Activated CD8-positive, alpha-beta memory T cell treated with anti-CD3 and anti-CD28 coated beads, Interleukin-2, amount 10 ng/mL, durations not matched to agents 7 days and 5 days (primary cell): ENCODE measurements at regions of chr19 and their contacts with region 1.

Region 1: GRCh38 chr19:34220472-34221063 is 33.8 kb upstream of the GARRE1 start:
- DNase-seq: peak; percentile 74
- ATAC-seq: no peak
- H3K4me3 Mint-ChIP-seq: no peak overlapping the region
- H3K27ac Mint-ChIP-seq: no peak overlapping the region
- H3K4me1 Mint-ChIP-seq: peaks cover 47% of the 10 kb centered on the region
- H3K27me3 Mint-ChIP-seq: no peaks in the 10 kb centered on the region

Region 2: DNA sequence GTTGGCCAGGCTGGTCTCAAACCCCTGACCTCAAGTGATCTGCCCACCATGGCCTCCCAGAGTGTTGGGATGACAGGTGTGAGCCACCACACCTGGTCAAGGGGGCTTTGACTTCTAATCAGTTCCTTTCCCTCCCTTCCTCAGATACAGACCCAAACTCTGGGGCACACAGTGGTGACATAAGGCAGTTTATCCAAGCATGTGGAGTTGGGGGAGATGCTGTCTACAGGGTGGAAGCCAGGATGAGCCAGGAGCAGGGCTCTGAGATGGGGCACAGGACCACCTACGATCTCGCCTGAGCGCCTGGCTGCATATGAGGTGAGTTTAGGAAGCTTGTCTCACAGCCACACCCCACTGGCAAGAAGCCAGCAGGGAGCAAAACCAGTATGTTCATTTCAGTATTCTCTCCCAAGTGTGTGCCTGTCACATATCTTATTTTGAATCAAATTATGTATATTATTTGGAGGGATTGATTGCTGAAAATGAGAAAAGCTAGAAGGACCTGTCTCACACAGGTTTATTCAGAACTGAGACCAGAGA is 356.2 kb before region 1 on chr19:
- CTCF ChIA-PET with region 1: no interaction called
- DNase-seq: no peak
- ATAC-seq: no peak
- H3K4me3 Mint-ChIP-seq: no peak overlapping the region
- H3K27ac Mint-ChIP-seq: no peak overlapping the region
- H3K4me1 Mint-ChIP-seq: no peaks in the 10 kb centered on the region
- H3K27me3 Mint-ChIP-seq: peaks cover 14% of the 10 kb centered on the region

Region 3: DNA sequence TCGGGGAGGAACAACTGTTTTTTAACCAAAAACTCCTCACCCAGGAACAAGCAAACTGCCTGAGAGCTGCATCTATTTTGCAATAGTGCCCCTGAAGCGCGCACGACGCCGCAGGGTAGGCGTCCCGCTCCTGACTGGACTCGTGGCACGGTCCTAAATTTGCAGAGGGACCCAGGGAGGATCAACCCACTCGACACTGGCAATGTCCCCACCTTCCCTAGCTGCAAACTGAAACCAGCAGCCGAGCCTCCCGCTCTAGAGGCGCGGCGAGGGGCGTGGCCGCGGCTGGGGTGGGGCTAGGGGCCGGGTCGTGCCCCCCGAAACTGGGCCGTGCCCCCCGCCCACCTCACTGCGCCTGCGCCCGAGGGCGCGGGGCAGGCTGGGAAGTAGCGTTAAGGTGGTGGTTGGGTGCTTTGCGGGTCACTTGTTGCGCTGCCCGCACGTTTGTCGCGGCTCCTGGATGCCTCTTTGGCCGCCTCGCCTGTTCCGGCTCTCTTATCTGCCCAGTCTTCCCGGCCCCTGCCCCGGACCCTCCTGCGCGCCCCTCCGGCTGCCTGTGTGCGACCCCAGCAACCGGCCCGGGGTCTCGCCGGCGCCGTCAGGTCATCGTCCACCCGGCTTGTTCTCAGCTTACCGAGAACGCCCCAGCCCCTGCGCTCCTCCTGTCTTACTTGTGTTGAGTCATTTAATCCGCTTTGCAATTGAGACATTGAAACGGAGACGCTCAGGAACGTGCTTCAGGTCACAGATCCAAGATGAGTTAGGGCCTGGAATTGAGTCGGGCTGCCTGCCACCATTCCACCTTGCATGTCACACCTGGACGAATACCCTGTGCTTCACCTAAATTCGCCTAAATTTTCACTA is 86.1 kb before region 1 on chr19:
- CTCF ChIA-PET with region 1: interaction called, 11 read pairs
- DNase-seq: peak; percentile 94
- ATAC-seq: peak; percentile 98
- H3K4me3 Mint-ChIP-seq: peak overlapping the region; percentile 95
- H3K27ac Mint-ChIP-seq: peak overlapping the region; percentile 93
- H3K4me1 Mint-ChIP-seq: peaks cover 4% of the 10 kb centered on the region
- H3K27me3 Mint-ChIP-seq: peaks cover 2% of the 10 kb centered on the region

Region 4: GRCh38 chr19:34171877-34172660 is 48.5 kb before region 1 on chr19 and contains the start of gene LSM14A:
- CTCF ChIA-PET with region 1: interaction called, 10 read pairs
- DNase-seq: peak; percentile 93
- ATAC-seq: peak; percentile 85
- H3K4me3 Mint-ChIP-seq: peak within 1 kb of the TSS; percentile 93
- H3K27ac Mint-ChIP-seq: peak within 1 kb of the TSS; percentile 98
- H3K4me1 Mint-ChIP-seq: peaks cover 37% of the 10 kb centered on the region
- H3K27me3 Mint-ChIP-seq: no peaks in the 10 kb centered on the region
- total RNA-seq, gene LSM14A: 112 to 116 TPM